ENCODE measurements at regions of chr17 and their contacts with region 1.

Region 1: DNA sequence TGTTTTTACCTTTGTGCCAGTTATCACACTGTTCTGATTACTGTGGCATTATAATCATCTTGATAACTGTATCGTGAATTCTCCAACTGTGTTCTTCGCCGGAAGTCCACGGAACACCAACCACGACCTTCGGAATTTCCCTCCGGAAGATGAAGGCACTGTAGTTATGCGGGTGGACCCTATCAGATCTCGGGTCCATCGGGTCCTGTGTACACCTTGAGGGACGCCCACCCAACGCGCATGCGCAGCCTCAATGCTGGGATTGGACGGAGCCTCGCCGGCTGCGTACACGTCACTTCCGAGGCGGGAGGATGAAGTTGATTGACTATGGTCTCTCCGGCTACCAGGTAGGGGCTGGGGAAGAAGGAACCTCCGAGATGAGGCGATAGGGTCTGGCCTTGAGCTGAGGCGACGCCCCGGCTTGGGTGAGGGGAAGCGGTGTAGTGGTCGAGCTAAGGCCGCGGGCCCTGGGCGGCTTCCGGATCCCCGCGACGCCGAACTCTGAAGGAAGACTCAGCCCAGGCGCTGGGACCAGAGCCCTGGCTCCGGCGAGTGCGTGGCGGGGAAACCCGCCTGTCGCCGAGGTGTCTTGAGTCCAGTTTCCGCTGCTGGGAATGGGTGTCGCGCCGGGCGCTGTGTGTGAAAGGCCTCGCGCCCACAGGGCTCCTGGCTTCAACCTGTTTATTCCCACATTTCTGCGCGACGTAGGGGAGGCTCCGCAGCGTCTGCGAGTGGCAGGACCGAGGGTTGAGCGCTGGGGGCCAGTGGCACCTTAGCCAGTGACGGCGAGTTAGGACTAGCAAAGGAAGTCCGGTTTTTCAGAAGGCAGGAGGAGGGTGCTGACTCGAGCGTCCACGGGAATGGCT is at the start of gene DHRS7B:
- DNase-seq: peak; percentile 97
- H3K4me3 ChIP-seq: peak within 1 kb of the TSS; percentile 77 to 93
- H3K27ac ChIP-seq: peak within 1 kb of the TSS; percentile 87 to 88
- H3K4me1 ChIP-seq: no peaks in the 10 kb centered on the region
- H3K27me3 ChIP-seq: no peaks in the 10 kb centered on the region
- CTCF ChIP-seq: peak in 1 of 3 experiments; percentile 9
- POLR2A ChIP-seq: no peak
- total RNA-seq, gene DHRS7B: 39.0 to 53.6 TPM

Region 2: GRCh38 chr17:21284319-21285163 is 157.7 kb after region 1 on chr17 and contains the start of gene MAP2K3:
- intact Hi-C with region 1: loop called (anchors 10 kb)
- DNase-seq: peak; percentile 100
- H3K4me3 ChIP-seq: peak within 1 kb of the TSS; percentile 80 to 88
- H3K27ac ChIP-seq: peak within 1 kb of the TSS; percentile 79 to 89
- H3K4me1 ChIP-seq: peaks cover 40% of the 10 kb centered on the region
- H3K27me3 ChIP-seq: no peaks in the 10 kb centered on the region
- CTCF ChIP-seq: no peak
- POLR2A ChIP-seq: peak; percentile 80
- total RNA-seq, gene MAP2K3: 13.5 to 17.5 TPM

Region 3: DNA sequence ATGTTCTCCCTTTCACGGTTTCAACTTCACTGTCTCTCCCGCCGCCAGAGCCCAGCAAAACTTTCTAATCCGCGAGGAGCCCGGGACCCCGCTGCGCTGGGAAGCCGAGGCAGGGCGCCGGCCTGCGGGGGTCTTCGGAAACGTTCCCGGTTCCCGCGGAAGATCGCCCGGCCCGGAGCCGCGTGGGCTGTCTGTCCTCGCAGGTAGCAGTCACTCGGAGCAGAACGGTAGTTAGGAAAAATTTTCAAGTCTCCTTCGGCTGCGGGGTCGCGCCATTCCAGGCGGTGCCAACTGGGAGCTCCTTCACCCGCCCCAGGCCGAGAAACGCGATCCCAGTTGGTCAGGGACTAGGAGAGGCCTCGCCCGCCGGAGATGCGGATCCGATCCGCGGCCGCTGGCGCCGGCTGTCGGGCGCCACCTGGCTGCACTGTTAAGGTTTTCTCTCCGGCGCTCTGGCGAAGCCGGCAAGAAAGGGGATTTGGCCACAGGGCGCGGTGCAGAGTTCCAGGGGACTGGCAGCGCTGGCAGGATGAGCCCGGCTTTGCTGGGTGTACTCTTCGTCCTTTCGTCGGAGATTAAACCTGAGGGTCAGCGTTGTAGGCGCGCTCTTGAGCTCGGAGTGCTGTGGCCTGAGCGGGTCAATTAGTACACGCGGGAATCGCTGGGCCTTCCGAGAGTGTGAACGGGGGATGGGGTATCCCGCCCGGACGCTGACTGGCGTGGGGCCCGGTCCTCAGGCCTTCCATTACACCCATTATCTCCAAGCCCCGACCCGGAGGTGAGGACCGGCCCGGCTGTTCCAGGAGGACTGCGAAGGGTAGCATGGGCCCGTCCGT is 384.7 kb after region 1 on chr17:
- intact Hi-C with region 1: loop called (anchors 10 kb)
- DNase-seq: peak; percentile 88
- H3K4me3 ChIP-seq: peak overlapping the region; percentile 29 to 58
- H3K27ac ChIP-seq: no peak overlapping the region
- H3K4me1 ChIP-seq: peaks cover 8% of the 10 kb centered on the region
- H3K27me3 ChIP-seq: no peaks in the 10 kb centered on the region
- CTCF ChIP-seq: peak; percentile 64 to 74 (median 65)
- POLR2A ChIP-seq: no peak